Heart right ventricle (tissue), 16 donors: ENCODE measurements at regions of chr10 and their contacts with region 1.

Region 1: GRCh38 chr10:13808556-13809391 is 222.0 kb downstream of the PRPF18 start:
- DNase-seq: no peak
- ATAC-seq: peak in 3 of 8 donors; percentile 16 to 34 (median 34)
- H3K4me3 ChIP-seq: no peak overlapping the region
- H3K27ac ChIP-seq: peak overlapping the region in 3 of 10 donors; percentile 32 to 56 (median 38)
- H3K4me1 ChIP-seq: peaks cover 0 to 40% (median 21%) of the 10 kb centered on the region in 9 donors
- H3K27me3 ChIP-seq: no peaks in the 10 kb centered on the region
- CTCF ChIP-seq: no peak

Region 2: GRCh38 chr10:13698217-13698616 is 110.6 kb before region 1 on chr10:
- intact Hi-C with region 1: no loop called
- DNase-seq: peak in 1 of 2 donors; percentile 27
- ATAC-seq: peak; percentile 62 to 93 (median 85)
- H3K4me3 ChIP-seq: no peak overlapping the region
- H3K27ac ChIP-seq: peak overlapping the region; percentile 37 to 74 (median 60)
- H3K4me1 ChIP-seq: peaks cover 5 to 76% (median 53%) of the 10 kb centered on the region in 9 donors
- H3K27me3 ChIP-seq: no peaks in the 10 kb centered on the region
- CTCF ChIP-seq: no peak

Region 3: DNA sequence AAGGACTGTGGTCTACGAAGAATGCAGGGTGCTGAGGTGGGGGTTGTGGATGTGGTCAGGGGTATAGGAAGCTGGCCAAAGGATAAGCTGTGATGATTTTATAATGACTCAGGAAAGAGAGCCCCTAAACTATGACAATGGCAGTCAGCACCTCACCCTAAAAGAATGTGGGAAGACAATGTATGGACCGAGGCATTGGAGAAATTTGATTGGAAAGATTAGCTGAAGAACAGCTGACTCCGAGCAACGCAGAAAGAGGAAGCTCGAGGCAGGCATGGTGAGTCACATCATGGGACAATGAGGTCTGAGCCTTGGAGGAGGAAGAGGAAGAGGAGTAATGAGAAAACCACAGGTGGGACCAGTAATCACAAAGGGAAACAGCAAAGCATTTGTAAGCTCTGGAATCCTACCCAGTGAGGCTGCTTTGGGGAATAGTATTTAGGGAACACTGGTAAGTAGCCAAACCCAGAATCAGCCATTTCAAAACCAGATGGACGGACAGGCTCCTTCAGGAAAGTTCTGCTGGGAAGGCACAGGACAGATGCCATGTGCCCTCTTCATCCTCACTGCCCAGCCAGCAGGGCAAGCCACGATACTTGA is 73.4 kb after region 1 on chr10:
- intact Hi-C with region 1: loop called in 1 of 10 experiments (anchors 10 kb)
- DNase-seq: peak in 1 of 2 donors; percentile 69
- ATAC-seq: peak; percentile 70 to 94 (median 82)
- H3K4me3 ChIP-seq: peak overlapping the region in 1 of 10 donors; percentile 11
- H3K27ac ChIP-seq: peak overlapping the region; percentile 56 to 92 (median 76)
- H3K4me1 ChIP-seq: peaks cover 7 to 66% (median 43%) of the 10 kb centered on the region in 9 donors
- H3K27me3 ChIP-seq: no peaks in the 10 kb centered on the region
- CTCF ChIP-seq: no peak